Naive thymus-derived CD4-positive, alpha-beta T cell (primary cell): ENCODE measurements at regions of chr12 and their contacts with region 1.

Region 1: GRCh38 chr12:53995378-53996239 is 4.4 kb upstream of the HOXC9 start:
- DNase-seq: no peak
- ATAC-seq: peak; percentile 31
- H3K4me3 ChIP-seq: peak overlapping the region; percentile 62
- H3K4me3 Mint-ChIP-seq: peak overlapping the region; percentile 77 to 88 (median 85)
- H3K27ac ChIP-seq: no peak overlapping the region
- H3K27ac Mint-ChIP-seq: peak overlapping the region in 3 of 9 donors; percentile 24 to 73 (median 58)
- H3K4me1 ChIP-seq: peaks cover 24 to 28% of the 10 kb centered on the region in 2 donors
- H3K4me1 Mint-ChIP-seq: peaks cover 22 to 63% (median 37%) of the 10 kb centered on the region in 7 donors
- H3K27me3 ChIP-seq: peaks cover 49 to 91% of the 10 kb centered on the region in 2 donors
- H3K27me3 Mint-ChIP-seq: peaks cover 86 to 98% (median 88%) of the 10 kb centered on the region in 5 donors

Region 2: GRCh38 chr12:53938326-53939140 is 57.1 kb before region 1 on chr12 and contains the start of gene HOXC13:
- CTCF ChIA-PET with region 1: no interaction called
- POLR2A ChIA-PET with region 1: no interaction called
- intact Hi-C with region 1: loop called in 1 of 2 experiments (anchors 5 kb)
- DNase-seq: peak in 1 of 9 donors; percentile 21
- ATAC-seq: no peak
- H3K4me3 ChIP-seq: no peak within 1 kb of the TSS
- H3K4me3 Mint-ChIP-seq: peak within 1 kb of the TSS in 8 of 10 donors; percentile 22 to 63 (median 42)
- H3K27ac ChIP-seq: no peak within 1 kb of the TSS
- H3K27ac Mint-ChIP-seq: peak within 1 kb of the TSS in 2 of 9 donors; percentile 13 to 46
- H3K4me1 ChIP-seq: peaks cover 0 to 3% of the 10 kb centered on the region in 2 donors
- H3K4me1 Mint-ChIP-seq: peaks cover 0 to 35% (median 23%) of the 10 kb centered on the region in 7 donors
- H3K27me3 ChIP-seq: peaks cover 18 to 42% of the 10 kb centered on the region in 2 donors
- H3K27me3 Mint-ChIP-seq: peaks cover 84 to 95% (median 90%) of the 10 kb centered on the region in 5 donors
- total RNA-seq, gene HOXC13: not detected

Region 3: GRCh38 chr12:53961025-53961761 is 34.4 kb before region 1 on chr12:
- CTCF ChIA-PET with region 1: no interaction called
- POLR2A ChIA-PET with region 1: no interaction called
- intact Hi-C with region 1: loop called in 1 of 2 experiments (anchors 5 kb)
- DNase-seq: no peak
- ATAC-seq: no peak
- H3K4me3 ChIP-seq: no peak overlapping the region
- H3K4me3 Mint-ChIP-seq: no peak overlapping the region
- H3K27ac ChIP-seq: no peak overlapping the region
- H3K27ac Mint-ChIP-seq: no peak overlapping the region
- H3K4me1 ChIP-seq: peaks cover 14 to 16% of the 10 kb centered on the region in 2 donors
- H3K4me1 Mint-ChIP-seq: peaks cover 10 to 51% (median 34%) of the 10 kb centered on the region in 7 donors
- H3K27me3 ChIP-seq: peaks cover 32 to 73% of the 10 kb centered on the region in 2 donors
- H3K27me3 Mint-ChIP-seq: peaks cover 89 to 93% (median 90%) of the 10 kb centered on the region in 5 donors

Region 4: DNA sequence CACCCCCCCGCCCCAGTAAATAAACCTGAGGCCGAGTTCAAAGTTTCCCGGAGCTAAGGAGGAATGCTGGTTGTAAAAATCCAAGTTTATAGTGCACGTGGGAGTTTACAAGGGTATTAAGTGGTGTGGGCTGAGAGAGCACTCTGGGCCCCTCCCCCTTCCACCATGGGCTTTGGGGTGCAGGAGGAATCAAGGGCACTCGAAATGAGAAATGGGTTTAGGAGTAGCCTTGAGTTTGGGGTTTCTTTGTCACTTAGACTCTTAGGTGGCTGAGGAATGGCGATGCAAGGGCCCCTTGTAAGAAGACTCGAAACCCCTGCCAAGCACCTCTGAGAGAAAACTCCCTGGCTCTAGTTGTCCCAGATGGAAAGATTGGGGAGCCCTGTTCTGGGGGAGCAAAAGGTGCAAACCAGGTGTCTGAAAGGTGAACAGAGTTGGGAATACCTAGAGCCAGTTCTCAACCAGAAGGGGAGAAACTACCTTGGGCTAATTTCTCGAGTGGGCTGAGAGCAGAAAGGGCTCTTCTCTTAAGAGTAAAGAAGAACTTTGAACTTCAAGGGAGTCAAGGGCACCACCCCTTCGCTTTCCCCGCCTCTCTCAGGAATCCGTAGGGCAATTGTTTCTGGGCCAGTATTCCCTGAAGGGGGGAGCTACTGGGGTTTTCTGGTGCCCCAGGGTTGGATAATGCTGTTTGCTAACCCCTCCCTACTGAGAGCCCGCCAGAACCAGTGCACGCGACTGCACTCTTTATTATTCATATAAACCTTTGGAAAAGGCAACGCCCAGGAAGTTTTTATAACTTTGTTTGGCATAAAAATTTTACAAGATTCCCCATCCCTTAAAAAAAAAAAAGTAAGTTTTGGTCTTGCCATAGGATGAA is 16.9 kb before region 1 on chr12:
- CTCF ChIA-PET with region 1: no interaction called
- POLR2A ChIA-PET with region 1: no interaction called
- intact Hi-C with region 1: loop called in 1 of 2 experiments (anchors 1 kb)
- DNase-seq: no peak
- ATAC-seq: no peak
- H3K4me3 ChIP-seq: no peak overlapping the region
- H3K4me3 Mint-ChIP-seq: no peak overlapping the region
- H3K27ac ChIP-seq: no peak overlapping the region
- H3K27ac Mint-ChIP-seq: peak overlapping the region in 1 of 9 donors; percentile 21
- H3K4me1 ChIP-seq: peaks cover 10 to 21% of the 10 kb centered on the region in 2 donors
- H3K4me1 Mint-ChIP-seq: peaks cover 0 to 29% (median 16%) of the 10 kb centered on the region in 7 donors
- H3K27me3 ChIP-seq: peaks cover 37 to 89% of the 10 kb centered on the region in 2 donors
- H3K27me3 Mint-ChIP-seq: peaks cover 88 to 96% (median 90%) of the 10 kb centered on the region in 5 donors